A549 (cell line): ENCODE measurements at regions of chr9 and their contacts with region 1.

Region 1: GRCh38 chr9:136482793-136483588 is at the start of gene SEC16A:
- DNase-seq: peak; percentile 82 to 98
- ATAC-seq: peak; percentile 53 to 62
- H3K4me3 ChIP-seq: peak within 1 kb of the TSS; percentile 96
- H3K27ac ChIP-seq: peak within 1 kb of the TSS; percentile 91 to 98
- H3K4me1 ChIP-seq: peaks cover 15% of the 10 kb centered on the region
- CTCF ChIP-seq: no peak
- EP300 ChIP-seq: no peak
- POLR2A ChIP-seq: peak; percentile 88
- RAD21 ChIP-seq: no peak
- polyA plus RNA-seq, gene SEC16A: 24.2 and 32.3 TPM in 2 replicates

Region 2: DNA sequence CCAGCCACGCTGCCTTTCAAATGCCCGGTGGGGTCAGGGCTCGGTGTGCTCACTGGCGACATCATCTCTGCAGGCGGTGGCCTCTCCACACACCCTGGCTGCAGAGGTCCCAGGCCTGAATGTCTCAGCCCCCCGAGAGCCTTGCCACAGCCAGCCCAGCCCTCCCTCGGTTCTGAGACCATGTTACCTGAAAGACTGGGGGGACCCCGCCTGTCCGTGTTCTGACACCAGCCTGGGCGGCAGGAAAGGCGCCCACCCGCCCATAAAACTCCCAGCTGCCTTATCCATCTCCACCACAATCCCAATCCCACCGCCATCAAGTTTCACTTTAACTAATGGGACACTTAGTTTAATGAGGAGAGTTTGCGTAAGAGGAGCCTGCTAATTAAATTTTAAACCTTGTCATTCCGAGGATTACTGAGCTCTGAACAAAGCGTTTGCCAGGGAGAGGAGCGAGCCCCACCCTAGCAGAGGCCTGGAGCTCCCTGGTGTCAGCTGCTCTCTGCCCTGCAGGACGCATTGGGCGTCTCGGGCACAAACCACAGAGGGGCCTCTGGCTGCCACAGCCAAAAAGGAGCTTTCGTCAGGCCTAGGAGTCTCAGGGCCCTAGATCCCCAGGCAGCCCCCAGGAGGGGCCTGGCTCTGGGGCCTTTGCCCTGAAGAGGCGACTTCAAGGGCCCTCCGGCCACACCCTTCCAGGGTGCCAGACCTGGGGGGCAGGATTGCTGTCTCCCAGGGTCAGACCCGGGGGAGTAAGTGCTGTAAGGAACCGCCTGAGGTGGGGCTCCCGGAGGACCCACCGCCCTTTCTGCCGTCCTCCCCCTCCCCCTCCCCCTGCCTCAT is 293.4 kb before region 1 on chr9:
- CTCF ChIA-PET with region 1: no interaction called
- POLR2A ChIA-PET with region 1: no interaction called
- DNase-seq: no peak
- ATAC-seq: 0 out of 6 replicates have a peak, but pooled peaks of 1 of the 2 experiments have one; percentile 12
- H3K4me3 ChIP-seq: no peak overlapping the region
- H3K27ac ChIP-seq: no peak overlapping the region
- H3K4me1 ChIP-seq: peaks cover 17% of the 10 kb centered on the region
- CTCF ChIP-seq: no peak
- EP300 ChIP-seq: no peak
- POLR2A ChIP-seq: no peak
- RAD21 ChIP-seq: no peak

Region 3: GRCh38 chr9:136354592-136355085 is 128.4 kb before region 1 on chr9:
- CTCF ChIA-PET with region 1: no interaction called
- POLR2A ChIA-PET with region 1: no interaction called
- DNase-seq: peak; percentile 23 to 52
- ATAC-seq: peak; percentile 12 to 51; a peak in 5 of 6 replicates
- H3K4me3 ChIP-seq: no peak overlapping the region
- H3K27ac ChIP-seq: peak overlapping the region in 1 of 2 experiments; percentile 66; a peak in 3 of 6 replicates
- H3K4me1 ChIP-seq: peaks cover 27% of the 10 kb centered on the region
- CTCF ChIP-seq: no peak
- EP300 ChIP-seq: no peak
- POLR2A ChIP-seq: no peak
- RAD21 ChIP-seq: no peak

Region 4: DNA sequence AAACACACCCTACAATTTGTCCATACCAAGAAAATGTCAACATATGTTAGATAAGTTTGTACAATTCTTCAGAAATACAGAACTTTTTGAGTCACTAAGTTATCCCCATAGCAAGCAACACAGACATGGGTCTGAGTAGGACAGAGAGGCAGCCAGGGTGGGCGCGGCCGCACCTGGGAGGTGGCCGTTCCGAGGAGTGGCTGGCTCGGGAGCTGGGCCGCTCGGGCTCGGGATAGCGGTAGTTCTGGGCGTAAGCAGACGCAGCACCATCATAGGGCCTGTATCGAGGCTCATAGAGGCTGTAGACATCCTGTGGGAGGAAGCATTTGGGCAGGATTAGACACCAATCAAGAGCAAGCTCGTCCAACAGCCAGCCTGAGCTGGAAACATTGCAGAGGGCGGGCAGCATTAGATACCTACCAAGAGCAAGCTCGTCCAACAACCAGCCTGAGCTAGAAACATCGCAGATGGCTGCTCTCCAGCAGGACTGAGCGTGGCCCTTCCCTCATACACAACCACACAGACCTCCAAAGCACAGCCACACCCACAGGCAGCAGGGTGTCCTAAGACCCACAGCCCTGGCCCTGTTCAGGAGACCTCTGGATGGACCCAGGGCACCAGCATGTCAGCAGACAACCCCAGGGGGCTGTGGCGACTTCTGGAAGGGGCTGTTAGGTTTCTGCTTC is 11.0 kb before region 1 on chr9:
- CTCF ChIA-PET with region 1: interaction called, 14 read pairs
- POLR2A ChIA-PET with region 1: interaction called, 5 read pairs
- DNase-seq: no peak
- ATAC-seq: no peak
- H3K4me3 ChIP-seq: no peak overlapping the region
- H3K27ac ChIP-seq: no peak overlapping the region
- H3K4me1 ChIP-seq: no peaks in the 10 kb centered on the region
- CTCF ChIP-seq: no peak
- EP300 ChIP-seq: no peak
- POLR2A ChIP-seq: no peak
- RAD21 ChIP-seq: no peak

Region 5: GRCh38 chr9:136539427-136540421 is 56.7 kb after region 1 on chr9:
- CTCF ChIA-PET with region 1: interaction called, 70 read pairs
- POLR2A ChIA-PET with region 1: no interaction called
- DNase-seq: no peak
- ATAC-seq: no peak
- H3K4me3 ChIP-seq: no peak overlapping the region
- H3K27ac ChIP-seq: no peak overlapping the region
- H3K4me1 ChIP-seq: peaks cover 16% of the 10 kb centered on the region; the same call in 2 of the 3 replicates
- CTCF ChIP-seq: no peak
- EP300 ChIP-seq: no peak
- POLR2A ChIP-seq: no peak
- RAD21 ChIP-seq: no peak

Region 6: GRCh38 chr9:136572003-136572827 is 89.2 kb after region 1 on chr9:
- CTCF ChIA-PET with region 1: interaction called, 71 read pairs
- POLR2A ChIA-PET with region 1: no interaction called
- DNase-seq: peak; percentile 55 to 76
- ATAC-seq: peak; percentile 40 to 71
- H3K4me3 ChIP-seq: no peak overlapping the region
- H3K27ac ChIP-seq: peak overlapping the region; percentile 75
- H3K4me1 ChIP-seq: peaks cover 71% of the 10 kb centered on the region
- CTCF ChIP-seq: no peak
- EP300 ChIP-seq: peak in 1 of 2 experiments; percentile 25; a peak in 1 of 5 replicates
- POLR2A ChIP-seq: no peak
- RAD21 ChIP-seq: no peak

Region 7: DNA sequence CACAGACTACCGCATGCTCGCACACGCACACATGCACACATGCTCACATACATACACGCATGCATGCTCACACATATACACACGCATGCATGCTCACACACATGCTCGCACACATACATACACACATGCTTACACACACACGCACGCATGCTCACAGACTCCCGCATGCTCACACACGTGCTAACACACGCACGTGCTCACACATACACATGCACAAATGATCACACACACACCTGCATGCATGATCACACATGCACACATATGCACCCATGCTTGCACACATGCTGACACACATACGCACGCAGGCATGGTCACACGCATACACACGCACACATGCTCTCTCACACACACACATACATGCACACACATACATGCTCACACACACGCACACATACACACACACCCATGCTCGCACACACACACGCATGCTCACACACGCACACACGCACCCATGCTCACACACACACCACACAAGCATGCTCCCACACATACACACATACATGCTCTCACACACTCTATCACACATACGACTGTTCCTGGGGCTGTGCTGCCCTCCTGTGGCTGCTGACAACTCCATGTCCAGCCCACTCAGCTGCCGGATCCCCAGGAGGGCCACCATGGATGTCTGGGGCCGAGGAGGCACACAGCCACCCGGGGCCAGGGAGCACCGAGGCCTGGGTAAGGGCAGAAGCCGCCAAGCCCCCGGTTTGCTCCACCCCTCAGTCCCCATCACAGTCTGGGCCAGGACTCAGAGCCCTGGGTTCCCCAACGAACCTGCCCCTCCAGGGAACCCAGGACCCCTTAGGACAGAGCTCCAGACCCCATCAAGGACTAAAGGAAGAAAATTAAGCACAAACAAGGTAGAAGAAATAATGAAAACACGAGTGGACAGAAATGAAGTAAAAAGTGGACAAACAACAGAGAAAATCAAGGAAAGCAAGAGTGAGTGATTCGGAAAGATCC is 148.3 kb after region 1 on chr9:
- CTCF ChIA-PET with region 1: interaction called, 776 read pairs
- POLR2A ChIA-PET with region 1: interaction called, 17 read pairs
- DNase-seq: peak; percentile 80 to 83
- ATAC-seq: peak; percentile 87 to 93
- H3K4me3 ChIP-seq: no peak overlapping the region
- H3K27ac ChIP-seq: no peak overlapping the region
- H3K4me1 ChIP-seq: peaks cover 10% of the 10 kb centered on the region
- CTCF ChIP-seq: peak; percentile 92
- EP300 ChIP-seq: no peak
- POLR2A ChIP-seq: no peak
- RAD21 ChIP-seq: peak; percentile 97 to 99

Region 8: GRCh38 chr9:136655536-136656182 is 172.7 kb after region 1 on chr9:
- CTCF ChIA-PET with region 1: interaction called, 14 read pairs
- POLR2A ChIA-PET with region 1: no interaction called
- DNase-seq: no peak
- ATAC-seq: no peak
- H3K4me3 ChIP-seq: no peak overlapping the region
- H3K27ac ChIP-seq: peak overlapping the region in 1 of 2 experiments; percentile 62; a peak in 3 of 6 replicates
- H3K4me1 ChIP-seq: peaks cover 3% of the 10 kb centered on the region; the same call in 1 of the 3 replicates
- CTCF ChIP-seq: no peak
- EP300 ChIP-seq: no peak
- POLR2A ChIP-seq: no peak
- RAD21 ChIP-seq: no peak